Ovary (tissue), 10 donors: ENCODE measurements at regions of chr7 and their contacts with region 1.

Region 1: GRCh38 chr7:111535142-111535541 is 27.1 kb downstream of the IMMP2L start:
- DNase-seq: no peak
- H3K4me3 ChIP-seq: no peak overlapping the region
- H3K27ac ChIP-seq: no peak overlapping the region
- H3K4me1 ChIP-seq: no peaks in the 10 kb centered on the region
- H3K27me3 ChIP-seq: no peaks in the 10 kb centered on the region
- CTCF ChIP-seq: no peak
- EP300 ChIP-seq: no peak
- POLR2A ChIP-seq: no peak

Region 2: GRCh38 chr7:110407708-110408107 is 1127.4 kb before region 1 on chr7:
- intact Hi-C with region 1: no loop called
- DNase-seq: no peak
- H3K4me3 ChIP-seq: no peak overlapping the region
- H3K27ac ChIP-seq: no peak overlapping the region
- H3K4me1 ChIP-seq: no peaks in the 10 kb centered on the region
- H3K27me3 ChIP-seq: no peaks in the 10 kb centered on the region
- CTCF ChIP-seq: no peak
- EP300 ChIP-seq: no peak
- POLR2A ChIP-seq: no peak

Region 3: GRCh38 chr7:111108496-111108895 is 426.6 kb before region 1 on chr7:
- intact Hi-C with region 1: loop called in 1 of 4 experiments (anchors 5 kb)
- DNase-seq: no peak
- H3K4me3 ChIP-seq: no peak overlapping the region
- H3K27ac ChIP-seq: no peak overlapping the region
- H3K4me1 ChIP-seq: no peaks in the 10 kb centered on the region
- H3K27me3 ChIP-seq: no peaks in the 10 kb centered on the region
- CTCF ChIP-seq: no peak
- EP300 ChIP-seq: no peak
- POLR2A ChIP-seq: no peak